Activated CD4-positive, alpha-beta memory T cell treated with anti-CD3 and anti-CD28 coated beads for 36 hours (primary cell): ENCODE measurements at regions of chr6 and their contacts with region 1.

Region 1: GRCh38 chr6:21189759-21190158 is 403.8 kb upstream of the SOX4 start:
- DNase-seq: no peak
- H3K4me3 Mint-ChIP-seq: no peak overlapping the region
- H3K27ac Mint-ChIP-seq: no peak overlapping the region
- H3K4me1 Mint-ChIP-seq: peaks cover 27% of the 10 kb centered on the region
- H3K27me3 Mint-ChIP-seq: no peaks in the 10 kb centered on the region

Region 2: GRCh38 chr6:20877008-20877937 is 312.5 kb before region 1 on chr6:
- CTCF ChIA-PET with region 1: no interaction called
- POLR2A ChIA-PET with region 1: no interaction called
- intact Hi-C with region 1: loop called (anchors 2 kb)
- DNase-seq: peak; percentile 65
- H3K4me3 Mint-ChIP-seq: no peak overlapping the region
- H3K27ac Mint-ChIP-seq: peak overlapping the region; percentile 65
- H3K4me1 Mint-ChIP-seq: peaks cover 18% of the 10 kb centered on the region
- H3K27me3 Mint-ChIP-seq: no peaks in the 10 kb centered on the region

Region 3: DNA sequence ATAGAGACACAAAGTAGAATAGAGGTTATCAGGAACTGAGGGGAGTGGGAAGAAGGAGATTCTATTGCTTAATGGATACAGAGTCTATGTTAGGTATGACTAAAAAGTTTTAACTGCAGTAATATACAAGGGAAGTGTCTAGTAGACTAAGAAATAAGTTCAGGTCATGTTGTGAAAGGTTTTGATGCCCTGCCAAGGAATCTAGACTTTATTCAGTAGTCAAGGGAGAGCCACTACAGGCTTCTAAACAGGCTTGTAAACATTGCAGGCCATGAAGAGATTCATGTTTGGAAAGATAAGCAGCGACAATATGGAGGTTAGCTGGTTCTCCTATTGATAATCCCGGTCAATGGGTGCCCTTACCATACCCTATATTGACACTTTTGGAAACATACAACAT is 51.0 kb after region 1 on chr6:
- CTCF ChIA-PET with region 1: no interaction called
- POLR2A ChIA-PET with region 1: no interaction called
- intact Hi-C with region 1: no loop called
- DNase-seq: no peak
- H3K4me3 Mint-ChIP-seq: no peak overlapping the region
- H3K27ac Mint-ChIP-seq: no peak overlapping the region
- H3K4me1 Mint-ChIP-seq: no peaks in the 10 kb centered on the region
- H3K27me3 Mint-ChIP-seq: no peaks in the 10 kb centered on the region

Region 4: GRCh38 chr6:21263531-21264287 is 74.0 kb after region 1 on chr6:
- CTCF ChIA-PET with region 1: no interaction called
- POLR2A ChIA-PET with region 1: no interaction called
- intact Hi-C with region 1: loop called (anchors 1 kb)
- DNase-seq: peak; percentile 34
- H3K4me3 Mint-ChIP-seq: no peak overlapping the region
- H3K27ac Mint-ChIP-seq: no peak overlapping the region
- H3K4me1 Mint-ChIP-seq: peaks cover 22% of the 10 kb centered on the region
- H3K27me3 Mint-ChIP-seq: peaks cover 5% of the 10 kb centered on the region

Region 5: GRCh38 chr6:21381335-21382217 is 191.8 kb after region 1 on chr6:
- CTCF ChIA-PET with region 1: no interaction called
- POLR2A ChIA-PET with region 1: no interaction called
- intact Hi-C with region 1: no loop called
- DNase-seq: no peak
- H3K4me3 Mint-ChIP-seq: no peak overlapping the region
- H3K27ac Mint-ChIP-seq: no peak overlapping the region
- H3K4me1 Mint-ChIP-seq: no peaks in the 10 kb centered on the region
- H3K27me3 Mint-ChIP-seq: no peaks in the 10 kb centered on the region

Region 6: DNA sequence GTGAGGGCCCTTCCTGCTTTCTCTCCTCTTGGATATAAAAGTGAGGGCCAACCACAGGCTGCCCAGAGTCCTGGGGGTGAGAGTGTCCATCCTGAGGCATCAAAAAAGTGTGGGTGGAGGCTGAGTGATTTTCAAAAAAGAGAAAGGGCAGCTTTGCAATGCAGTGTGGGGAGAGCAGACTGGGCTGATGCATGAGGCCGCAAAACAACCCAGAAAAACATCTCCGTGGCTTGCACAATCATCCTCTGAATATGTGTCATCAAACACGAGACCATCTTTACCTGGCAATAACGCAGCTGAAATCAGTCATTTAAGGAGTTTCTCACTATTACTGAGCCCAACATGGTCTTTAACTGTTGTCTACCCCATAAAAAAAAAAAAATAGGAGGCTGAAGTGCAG is 212.6 kb after region 1 on chr6:
- CTCF ChIA-PET with region 1: no interaction called
- POLR2A ChIA-PET with region 1: no interaction called
- intact Hi-C with region 1: loop called (anchors 2 kb)
- DNase-seq: peak; percentile 72
- H3K4me3 Mint-ChIP-seq: no peak overlapping the region
- H3K27ac Mint-ChIP-seq: no peak overlapping the region
- H3K4me1 Mint-ChIP-seq: peaks cover 11% of the 10 kb centered on the region
- H3K27me3 Mint-ChIP-seq: peaks cover 17% of the 10 kb centered on the region